ENCODE measurements at regions of chr1 and their contacts with region 1.

Region 1: GRCh38 chr1:18913065-18913835 is 10.9 kb upstream of the ALDH4A1 start:
- DNase-seq: peak; percentile 70 to 96
- H3K4me3 ChIP-seq: no peak overlapping the region
- H3K27ac ChIP-seq: no peak overlapping the region
- H3K4me1 ChIP-seq: no peaks in the 10 kb centered on the region; a peak in 1 of 7 replicates
- H3K27me3 ChIP-seq: no peaks in the 10 kb centered on the region
- CTCF ChIP-seq: peak; percentile 97 to 100 (median 100)
- EP300 ChIP-seq: no peak
- POLR2A ChIP-seq: no peak
- RAD21 ChIP-seq: peak; percentile 88 to 92

Region 2: GRCh38 chr1:18592367-18592766 is 320.9 kb before region 1 on chr1:
- CTCF ChIA-PET with region 1: no interaction called
- POLR2A ChIA-PET with region 1: no interaction called
- DNase-seq: no peak
- H3K4me3 ChIP-seq: no peak overlapping the region
- H3K27ac ChIP-seq: no peak overlapping the region
- H3K4me1 ChIP-seq: peaks cover 0 to 2% (median 0%) of the 10 kb centered on the region in 4 experiments; a peak in 1 of 7 replicates
- H3K27me3 ChIP-seq: peaks cover 0 to 10% (median 4%) of the 10 kb centered on the region in 4 experiments; a peak in 5 of 7 replicates
- CTCF ChIP-seq: no peak
- EP300 ChIP-seq: no peak
- POLR2A ChIP-seq: no peak
- RAD21 ChIP-seq: no peak

Region 3: DNA sequence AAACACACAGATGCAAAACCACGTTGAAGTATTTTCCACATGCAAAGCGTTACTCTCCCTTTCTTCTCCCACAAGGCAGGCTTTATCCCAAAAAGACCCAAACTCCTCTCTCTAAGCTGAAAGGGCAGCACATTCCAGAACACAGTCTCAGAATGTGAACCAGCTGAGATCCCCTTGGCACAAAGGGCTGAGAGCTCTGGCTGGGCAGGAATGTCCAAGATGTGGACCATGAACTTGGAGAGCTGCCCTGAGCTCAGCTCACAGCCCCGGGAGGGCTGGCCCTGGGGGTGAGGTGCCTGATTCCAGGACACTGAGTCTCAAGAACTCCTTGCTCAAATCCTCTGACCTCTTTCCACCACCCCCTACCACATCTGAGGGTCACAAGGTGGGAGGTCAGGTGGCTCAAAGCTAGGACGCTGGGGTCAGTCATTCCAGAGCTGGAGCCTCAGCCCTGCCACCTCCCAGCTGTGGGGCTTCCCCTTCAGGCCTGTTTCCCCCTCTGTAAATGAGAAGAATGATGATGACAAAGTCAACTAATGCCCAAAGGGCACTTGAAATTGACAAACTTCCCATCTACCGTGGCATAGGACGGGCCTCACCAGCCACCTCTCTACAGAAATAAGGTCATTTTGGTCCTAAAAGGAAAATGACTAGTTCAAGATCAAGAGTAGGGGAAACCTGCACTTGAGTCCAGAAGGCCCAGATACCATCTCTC is 22.4 kb before region 1 on chr1:
- CTCF ChIA-PET with region 1: interaction called, 131 read pairs
- POLR2A ChIA-PET with region 1: interaction called, 4 read pairs
- DNase-seq: no peak
- H3K4me3 ChIP-seq: no peak overlapping the region
- H3K27ac ChIP-seq: no peak overlapping the region; the same call in 1 of the 2 replicates
- H3K4me1 ChIP-seq: peaks cover 0 to 3% (median 0%) of the 10 kb centered on the region in 4 experiments; a peak in 1 of 7 replicates
- H3K27me3 ChIP-seq: no peaks in the 10 kb centered on the region
- CTCF ChIP-seq: no peak
- EP300 ChIP-seq: no peak
- POLR2A ChIP-seq: no peak
- RAD21 ChIP-seq: no peak

Region 4: GRCh38 chr1:18941221-18942141 is 28.2 kb after region 1 on chr1:
- CTCF ChIA-PET with region 1: interaction called, 105 read pairs
- POLR2A ChIA-PET with region 1: no interaction called
- DNase-seq: no peak
- H3K4me3 ChIP-seq: peak overlapping the region in 1 of 4 experiments; percentile 0; a peak in 1 of 8 replicates
- H3K27ac ChIP-seq: peak overlapping the region; percentile 61
- H3K4me1 ChIP-seq: peaks cover 7 to 34% (median 27%) of the 10 kb centered on the region in 4 experiments
- H3K27me3 ChIP-seq: no peaks in the 10 kb centered on the region
- CTCF ChIP-seq: no peak
- EP300 ChIP-seq: no peak
- POLR2A ChIP-seq: peak in 1 of 2 experiments; percentile 39; a peak in 1 of 3 replicates
- RAD21 ChIP-seq: no peak

Region 5: GRCh38 chr1:18965206-18966173 is 52.2 kb after region 1 on chr1:
- CTCF ChIA-PET with region 1: interaction called, 40 read pairs
- POLR2A ChIA-PET with region 1: interaction called, 3 read pairs
- DNase-seq: peak in 1 of 2 experiments; percentile 75
- H3K4me3 ChIP-seq: no peak overlapping the region
- H3K27ac ChIP-seq: peak overlapping the region; percentile 34; the same call in 1 of the 2 replicates
- H3K4me1 ChIP-seq: peaks cover 0 to 8% (median 1%) of the 10 kb centered on the region in 4 experiments; a peak in 4 of 7 replicates
- H3K27me3 ChIP-seq: peaks cover 0 to 2% (median 1%) of the 10 kb centered on the region in 4 experiments; a peak in 3 of 7 replicates
- CTCF ChIP-seq: no peak
- EP300 ChIP-seq: no peak
- POLR2A ChIP-seq: no peak
- RAD21 ChIP-seq: no peak

Region 6: GRCh38 chr1:19028110-19028509 is 114.9 kb after region 1 on chr1:
- CTCF ChIA-PET with region 1: interaction called, 11 read pairs
- POLR2A ChIA-PET with region 1: no interaction called
- DNase-seq: no peak
- H3K4me3 ChIP-seq: no peak overlapping the region
- H3K27ac ChIP-seq: no peak overlapping the region
- H3K4me1 ChIP-seq: peaks cover 0 to 4% (median 0%) of the 10 kb centered on the region in 4 experiments; a peak in 4 of 7 replicates
- H3K27me3 ChIP-seq: no peaks in the 10 kb centered on the region; a peak in 1 of 7 replicates
- CTCF ChIP-seq: no peak
- EP300 ChIP-seq: no peak
- POLR2A ChIP-seq: no peak
- RAD21 ChIP-seq: no peak

Region 7: DNA sequence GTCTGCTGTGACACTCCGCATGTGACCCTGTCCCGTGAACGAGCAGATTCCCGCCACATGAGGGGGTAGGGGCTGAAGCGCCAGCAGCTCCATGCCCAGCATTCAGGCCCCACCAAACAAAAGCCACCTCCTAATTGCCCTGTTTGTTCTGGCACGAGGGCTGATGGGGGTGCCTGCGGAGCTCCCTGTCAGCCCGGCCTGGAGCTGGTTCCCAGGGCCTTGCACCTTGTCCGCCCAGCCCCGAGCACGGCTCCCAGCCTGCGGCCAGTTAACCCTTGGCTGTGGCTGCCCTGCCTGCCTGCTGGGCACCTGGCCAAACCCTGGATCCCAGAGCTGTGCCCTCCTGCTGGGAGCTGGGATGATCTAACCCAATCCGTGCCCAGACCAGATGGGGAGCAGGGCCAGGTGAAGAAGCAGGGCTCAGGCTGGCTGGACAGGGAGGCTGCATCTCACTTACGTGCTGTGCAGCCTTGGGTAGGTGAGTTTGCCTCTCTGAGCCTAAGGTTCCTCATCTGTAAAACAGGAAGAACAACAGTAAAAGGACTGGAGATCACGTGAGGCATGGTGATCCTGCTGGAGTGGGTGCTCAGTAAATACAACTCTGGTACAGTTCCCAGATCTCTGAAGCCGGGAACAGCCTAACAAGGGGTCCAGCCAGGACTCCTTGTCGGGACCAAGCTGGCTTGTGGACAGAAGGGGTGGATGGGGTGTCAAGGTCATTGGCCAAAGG is 154.1 kb after region 1 on chr1:
- CTCF ChIA-PET with region 1: interaction called, 59 read pairs
- POLR2A ChIA-PET with region 1: interaction called, 3 read pairs
- DNase-seq: no peak
- H3K4me3 ChIP-seq: no peak overlapping the region
- H3K27ac ChIP-seq: no peak overlapping the region
- H3K4me1 ChIP-seq: peaks cover 0 to 12% (median 5%) of the 10 kb centered on the region in 4 experiments; a peak in 5 of 7 replicates
- H3K27me3 ChIP-seq: no peaks in the 10 kb centered on the region
- CTCF ChIP-seq: peak in 1 of 3 experiments; percentile 35; a peak in 2 of 4 replicates
- EP300 ChIP-seq: no peak
- POLR2A ChIP-seq: no peak
- RAD21 ChIP-seq: peak in 1 of 2 experiments; percentile 23; a peak in 2 of 4 replicates

Measured in H1 (cell line).